CD14-positive monocyte (primary cell): ENCODE measurements at regions of chr7 and their contacts with region 1.

Region 1: GRCh38 chr7:129433847-129434674 is at the start of gene STRIP2:
- DNase-seq: peak; percentile 57 to 78 (median 68)
- H3K4me3 ChIP-seq: peak within 1 kb of the TSS; percentile 59 to 83 (median 71)
- H3K4me3 Mint-ChIP-seq: peak within 1 kb of the TSS; percentile 90 to 98
- H3K27ac ChIP-seq: no peak within 1 kb of the TSS
- H3K27ac Mint-ChIP-seq: peak within 1 kb of the TSS in 5 of 7 donors; percentile 31 to 78 (median 68)
- H3K4me1 ChIP-seq: peaks cover 17 to 19% of the 10 kb centered on the region in 2 donors
- H3K4me1 Mint-ChIP-seq: peaks cover 25% of the 10 kb centered on the region
- H3K27me3 ChIP-seq: peaks cover 32 to 44% of the 10 kb centered on the region in 2 donors
- H3K27me3 Mint-ChIP-seq: peaks cover 39 to 48% (median 44%) of the 10 kb centered on the region in 3 donors
- CTCF ChIP-seq: no peak
- polyA plus RNA-seq, gene STRIP2: 0.11 to 0.12 TPM in 2 of 3 donors, not detected in the other

Region 2: DNA sequence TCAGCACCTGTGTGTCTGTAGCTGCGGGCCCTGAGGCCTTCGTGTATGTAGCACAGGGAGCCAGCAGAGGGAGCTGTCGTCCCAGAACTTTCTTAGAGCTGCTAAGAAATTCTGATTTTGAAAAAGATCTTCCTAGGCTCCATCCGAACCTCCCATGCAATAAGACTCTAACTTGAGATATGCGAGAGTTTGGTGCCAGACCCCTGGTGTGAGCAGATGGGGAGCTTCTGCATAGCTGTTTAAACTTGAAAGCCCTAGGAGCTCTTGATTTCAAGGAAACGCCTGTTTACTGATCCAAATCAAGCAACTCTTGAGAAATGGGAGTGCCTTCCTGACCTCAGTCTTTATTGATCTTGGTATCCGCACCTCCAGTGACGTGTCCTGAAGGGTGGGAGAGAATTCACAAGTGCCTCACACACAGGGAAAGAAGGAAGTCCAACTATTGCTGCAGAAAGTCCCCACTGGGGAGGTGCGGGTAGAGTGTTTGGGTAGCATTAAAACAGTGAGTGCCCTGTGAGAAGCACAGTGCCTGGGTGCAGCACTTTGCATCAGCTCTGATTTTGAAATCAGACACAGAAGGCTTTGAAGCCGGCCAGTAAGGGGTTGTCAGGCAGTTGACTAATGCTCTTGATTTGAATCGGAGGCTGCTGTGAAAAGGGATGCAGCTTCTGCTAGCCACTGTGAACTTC is 66.2 kb before region 1 on chr7:
- intact Hi-C with region 1: no loop called
- DNase-seq: peak; percentile 69 to 88 (median 69)
- H3K4me3 ChIP-seq: peak overlapping the region in 2 of 3 experiments; percentile 38 to 56
- H3K4me3 Mint-ChIP-seq: peak overlapping the region; percentile 58 to 85
- H3K27ac ChIP-seq: peak overlapping the region; percentile 11 to 67
- H3K27ac Mint-ChIP-seq: peak overlapping the region; percentile 62 to 91 (median 84)
- H3K4me1 ChIP-seq: peaks cover 18 to 31% of the 10 kb centered on the region in 2 donors
- H3K4me1 Mint-ChIP-seq: peaks cover 27% of the 10 kb centered on the region
- H3K27me3 ChIP-seq: no peaks in the 10 kb centered on the region
- H3K27me3 Mint-ChIP-seq: no peaks in the 10 kb centered on the region
- CTCF ChIP-seq: peak; percentile 95

Region 3: DNA sequence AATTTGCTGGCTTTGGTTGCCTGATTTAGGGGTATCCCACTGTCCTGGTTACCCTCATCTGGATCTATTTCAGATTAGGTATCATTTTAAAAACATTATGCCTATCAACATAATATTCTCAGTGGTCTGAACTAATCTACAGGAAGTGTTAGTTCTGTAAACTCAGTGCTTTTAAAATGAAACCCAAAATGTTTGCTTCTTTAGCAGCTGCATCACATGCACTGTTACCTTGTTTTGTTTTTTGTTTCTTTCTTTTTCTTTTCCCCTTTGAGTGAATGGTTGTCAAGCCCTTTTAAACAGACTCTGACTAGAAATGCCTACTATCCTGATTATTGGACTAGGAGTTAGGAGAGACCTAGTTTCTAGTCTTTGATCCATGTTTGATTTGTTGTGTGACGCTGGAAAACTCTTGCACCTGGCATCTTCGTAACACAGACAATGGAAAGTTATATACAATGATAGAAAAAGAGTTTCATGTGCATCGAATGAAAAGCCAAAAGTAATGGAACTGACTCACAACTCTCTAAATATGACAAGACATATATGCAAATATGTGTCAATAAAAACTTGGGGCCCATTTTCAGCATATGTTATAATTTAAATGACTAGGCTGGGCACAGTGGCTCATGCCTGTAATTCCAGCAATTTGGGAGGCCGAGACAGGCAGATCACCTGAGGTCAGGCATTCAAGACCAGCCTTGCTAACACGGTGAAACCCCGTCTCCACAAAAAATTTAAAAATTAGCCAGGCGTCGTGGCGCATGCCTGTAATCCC is 52.2 kb before region 1 on chr7:
- intact Hi-C with region 1: loop called in 1 of 2 experiments (anchors 5 kb)
- DNase-seq: no peak
- H3K4me3 ChIP-seq: no peak overlapping the region
- H3K4me3 Mint-ChIP-seq: no peak overlapping the region
- H3K27ac ChIP-seq: no peak overlapping the region
- H3K27ac Mint-ChIP-seq: no peak overlapping the region
- H3K4me1 ChIP-seq: peaks cover 7 to 8% of the 10 kb centered on the region in 2 donors
- H3K4me1 Mint-ChIP-seq: peaks cover 8% of the 10 kb centered on the region
- H3K27me3 ChIP-seq: no peaks in the 10 kb centered on the region
- H3K27me3 Mint-ChIP-seq: no peaks in the 10 kb centered on the region
- CTCF ChIP-seq: no peak